Activated T-helper 1 cell treated with anti-CD3 and anti-CD28 coated beads, Interleukin-12 subunit alpha, Interleukin-12 subunit beta, Interleukin-2, Interleukin-4 antibody, amounts not matched to agents 30 ng/mL and 10 ng/mL and 1 ng/mL, durations not matched to agents 14 hours and 24 hours and 36 hours (primary cell): ENCODE measurements at regions of chr1 and their contacts with region 1.

Region 1: GRCh38 chr1:247210376-247211117 is 38.7 kb upstream of the ZNF124 start:
- DNase-seq: peak; percentile 93
- H3K4me3 Mint-ChIP-seq: peak overlapping the region; percentile 94
- H3K27ac Mint-ChIP-seq: peak overlapping the region; percentile 94
- H3K4me1 Mint-ChIP-seq: peaks cover 29% of the 10 kb centered on the region
- H3K27me3 Mint-ChIP-seq: no peaks in the 10 kb centered on the region

Region 2: DNA sequence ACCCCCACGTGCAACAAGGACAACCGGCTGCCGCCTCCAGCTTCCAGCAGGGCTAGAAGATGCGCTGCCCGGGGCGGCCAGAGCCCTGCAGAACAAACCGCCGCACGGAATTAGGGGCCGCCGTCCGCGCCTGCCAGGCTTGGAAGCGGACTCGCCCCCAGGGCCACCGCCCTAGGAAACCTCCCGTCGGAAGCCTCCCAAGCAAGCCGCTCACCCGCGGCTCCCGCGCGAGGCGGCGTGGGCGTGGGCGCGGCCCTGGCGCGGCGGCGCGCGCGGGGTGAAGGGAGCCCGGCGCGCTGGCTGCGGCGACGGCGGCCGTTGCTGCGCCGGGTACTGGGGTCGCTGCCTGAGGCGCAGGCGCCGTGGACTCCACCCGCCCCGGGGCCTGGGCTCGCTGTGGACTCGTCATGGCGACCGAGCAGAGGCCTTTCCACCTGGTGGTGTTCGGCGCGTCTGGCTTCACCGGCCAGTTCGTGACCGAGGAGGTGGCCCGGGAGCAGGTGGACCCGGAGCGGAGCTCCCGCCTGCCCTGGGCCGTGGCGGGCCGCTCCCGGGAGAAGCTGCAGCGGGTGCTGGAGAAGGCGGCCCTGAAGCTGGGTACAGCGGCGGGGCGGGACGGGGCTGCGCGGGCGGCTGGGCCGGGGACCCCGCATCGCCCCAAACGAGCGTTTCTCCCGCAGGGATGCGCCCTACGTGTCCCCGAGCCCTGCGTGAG is 486.4 kb before region 1 on chr1 and contains the start of gene SCCPDH:
- intact Hi-C with region 1: loop called (anchors 5 kb)
- DNase-seq: peak; percentile 55
- H3K4me3 Mint-ChIP-seq: peak within 1 kb of the TSS; percentile 92
- H3K27ac Mint-ChIP-seq: peak within 1 kb of the TSS; percentile 78
- H3K4me1 Mint-ChIP-seq: peaks cover 10% of the 10 kb centered on the region
- H3K27me3 Mint-ChIP-seq: peaks cover 6% of the 10 kb centered on the region
- total RNA-seq, gene SCCPDH: 23.5 and 24.3 TPM in 2 replicates

Region 3: GRCh38 chr1:247103859-247104591 is 106.5 kb before region 1 on chr1 and contains the start of gene ZNF669:
- intact Hi-C with region 1: loop called (anchors 1 kb)
- DNase-seq: peak; percentile 86
- H3K4me3 Mint-ChIP-seq: peak within 1 kb of the TSS; percentile 91
- H3K27ac Mint-ChIP-seq: peak within 1 kb of the TSS; percentile 74
- H3K4me1 Mint-ChIP-seq: peaks cover 15% of the 10 kb centered on the region
- H3K27me3 Mint-ChIP-seq: peaks cover 14% of the 10 kb centered on the region
- total RNA-seq, gene ZNF669: 8.0 and 9.5 TPM in 2 replicates

Region 4: DNA sequence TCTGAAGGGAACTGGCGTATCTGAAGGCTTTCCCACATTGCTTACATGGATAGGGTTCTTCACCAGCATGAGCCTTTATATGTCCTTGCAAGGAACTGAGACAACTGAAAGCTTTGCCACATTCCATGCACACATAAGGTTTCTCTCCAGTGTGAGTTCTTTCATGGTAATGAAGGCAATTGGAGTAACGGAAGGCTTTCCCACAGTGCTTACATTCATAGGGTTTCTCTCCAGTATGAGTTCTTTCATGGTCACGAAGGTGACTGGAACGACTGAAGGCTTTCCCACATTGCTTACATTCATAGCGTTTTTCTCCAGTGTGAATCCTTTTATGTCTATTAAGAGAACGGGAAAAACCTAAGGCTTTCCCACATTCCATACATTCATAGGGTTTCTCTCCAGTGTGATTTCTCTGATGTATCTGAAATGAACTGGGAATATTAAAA is 53.7 kb before region 1 on chr1:
- intact Hi-C with region 1: no loop called
- DNase-seq: no peak
- H3K4me3 Mint-ChIP-seq: no peak overlapping the region
- H3K27ac Mint-ChIP-seq: no peak overlapping the region
- H3K4me1 Mint-ChIP-seq: no peaks in the 10 kb centered on the region
- H3K27me3 Mint-ChIP-seq: no peaks in the 10 kb centered on the region

Region 5: GRCh38 chr1:247268390-247269045 is 58.0 kb after region 1 on chr1:
- intact Hi-C with region 1: loop called (anchors 10 kb)
- DNase-seq: no peak
- H3K4me3 Mint-ChIP-seq: no peak overlapping the region
- H3K27ac Mint-ChIP-seq: no peak overlapping the region
- H3K4me1 Mint-ChIP-seq: no peaks in the 10 kb centered on the region
- H3K27me3 Mint-ChIP-seq: no peaks in the 10 kb centered on the region

Region 6: DNA sequence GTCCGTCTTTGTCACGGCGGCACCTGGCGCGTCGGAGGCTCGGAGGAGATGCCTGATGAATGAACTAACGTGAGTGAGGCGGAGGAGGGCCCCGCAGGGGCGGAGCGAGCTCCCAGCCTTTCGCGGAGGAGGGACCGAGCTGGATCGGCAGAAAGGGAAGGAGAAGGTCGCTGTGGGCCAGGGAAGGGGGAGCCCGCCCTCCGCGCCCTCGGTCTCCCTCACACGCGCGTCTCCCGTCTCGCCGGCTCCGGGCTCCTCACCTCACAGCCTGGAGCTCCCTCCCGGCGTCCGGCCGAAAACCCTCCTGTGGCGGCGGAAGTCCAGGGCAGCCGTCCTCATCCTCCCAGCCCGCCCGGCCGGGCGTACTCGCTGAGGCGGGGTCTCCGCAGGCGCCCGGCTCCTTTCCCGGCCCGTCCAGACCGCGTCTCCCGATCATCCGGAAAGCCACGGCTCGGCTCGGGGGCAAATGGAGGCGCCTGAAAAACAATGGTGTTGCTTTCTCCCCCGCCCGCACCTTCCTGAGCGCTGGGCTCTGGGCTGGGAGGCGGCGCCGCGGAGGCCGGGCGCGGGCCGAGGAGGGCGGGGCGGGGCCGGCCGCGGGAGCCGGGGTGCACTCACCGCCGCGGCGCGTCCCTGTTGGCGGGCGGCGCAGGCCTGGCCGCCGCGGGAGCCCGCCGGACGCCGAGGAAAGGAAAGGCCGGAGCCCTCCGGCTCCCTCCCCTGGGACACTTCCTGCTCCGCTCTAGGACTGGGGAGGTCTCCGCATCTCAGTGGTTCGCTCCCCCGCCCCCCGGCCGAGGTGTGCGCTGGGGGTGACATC is 120.8 kb after region 1 on chr1 and contains the start of gene ZNF496:
- intact Hi-C with region 1: loop called (anchors 1 kb)
- DNase-seq: peak; percentile 65
- H3K4me3 Mint-ChIP-seq: peak within 1 kb of the TSS; percentile 92
- H3K27ac Mint-ChIP-seq: peak within 1 kb of the TSS; percentile 90
- H3K4me1 Mint-ChIP-seq: peaks cover 21% of the 10 kb centered on the region
- H3K27me3 Mint-ChIP-seq: no peaks in the 10 kb centered on the region
- total RNA-seq, gene ZNF496: 13.8 and 14.8 TPM in 2 replicates

Region 7: DNA sequence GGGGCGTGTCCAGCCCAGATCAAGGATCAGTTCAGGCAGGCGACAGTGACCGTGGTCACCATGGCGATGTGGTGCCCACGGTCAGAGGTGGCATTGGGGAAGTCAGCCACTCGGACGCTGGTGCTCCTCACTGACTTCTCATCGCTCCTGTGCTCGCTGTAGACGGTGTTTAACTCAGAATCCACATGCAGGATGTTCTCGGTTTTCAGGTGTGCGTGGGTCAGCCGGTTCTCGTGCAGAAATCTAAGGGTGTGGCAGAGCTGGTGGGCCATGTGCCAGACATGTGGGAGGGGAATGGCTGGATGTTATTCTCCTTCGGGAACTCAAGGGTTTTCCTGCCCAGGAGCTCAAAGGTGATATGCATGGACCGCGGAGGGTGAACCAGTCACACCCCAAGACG is 725.9 kb after region 1 on chr1:
- intact Hi-C with region 1: loop called (anchors 2 kb)
- DNase-seq: no peak
- H3K4me3 Mint-ChIP-seq: no peak overlapping the region
- H3K27ac Mint-ChIP-seq: no peak overlapping the region
- H3K4me1 Mint-ChIP-seq: no peaks in the 10 kb centered on the region
- H3K27me3 Mint-ChIP-seq: peaks cover 4% of the 10 kb centered on the region